Activated T-helper 1 cell treated with anti-CD3 and anti-CD28 coated beads, Interleukin-12 subunit alpha, Interleukin-12 subunit beta, Interleukin-2, Interleukin-4 antibody, amounts not matched to agents 30 ng/mL and 10 ng/mL and 1 ng/mL, durations not matched to agents 14 hours and 24 hours and 36 hours (primary cell): ENCODE measurements at regions of chr19 and their contacts with region 1.

Region 1: DNA sequence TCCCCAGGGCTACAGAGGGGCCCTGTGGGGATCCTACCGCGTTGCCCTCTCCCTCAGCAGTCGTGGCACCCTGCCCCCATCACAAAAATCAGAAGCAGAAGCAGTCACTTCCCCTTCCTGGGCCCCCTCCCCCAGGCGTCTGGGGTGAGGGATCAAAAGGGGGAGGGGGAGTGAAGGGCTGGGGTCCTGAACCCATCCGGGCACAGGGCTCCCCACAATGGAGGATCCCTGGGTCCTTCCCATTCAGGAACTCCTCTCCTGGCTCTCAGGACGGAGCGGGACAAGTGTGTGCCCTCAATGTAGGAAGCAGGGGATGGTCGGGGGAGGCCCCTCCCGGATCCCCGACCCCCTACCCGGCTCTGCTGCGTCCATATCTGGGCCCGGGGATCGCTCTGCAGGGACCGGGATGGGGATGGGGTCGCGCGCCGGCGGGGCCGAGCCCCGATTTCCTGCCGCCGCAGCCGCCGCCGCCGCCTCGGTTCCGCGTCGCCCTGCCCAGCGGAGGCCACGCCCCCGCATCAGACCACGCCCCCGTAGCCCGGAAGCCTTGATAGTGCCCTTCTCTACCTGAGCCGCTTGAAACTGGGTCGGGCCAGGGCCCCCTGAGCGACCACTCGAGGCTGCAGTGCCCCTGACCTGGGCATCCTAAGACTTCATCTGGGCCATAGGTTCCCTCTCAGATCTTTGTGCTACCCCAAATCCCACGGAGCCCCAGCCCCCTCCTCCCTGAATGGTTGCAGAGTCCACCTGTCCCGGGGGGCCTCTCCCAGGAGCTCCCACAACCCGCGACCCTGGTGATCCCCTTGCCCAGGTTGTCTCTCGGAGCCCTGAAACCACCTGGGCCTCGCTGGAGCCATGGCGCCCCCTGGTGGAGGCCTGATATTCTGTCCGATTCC is at the start of gene GMIP:
- DNase-seq: peak; percentile 82
- H3K4me3 Mint-ChIP-seq: peak within 1 kb of the TSS; percentile 95
- H3K27ac Mint-ChIP-seq: peak within 1 kb of the TSS; percentile 93
- H3K4me1 Mint-ChIP-seq: peaks cover 18% of the 10 kb centered on the region
- H3K27me3 Mint-ChIP-seq: no peaks in the 10 kb centered on the region
- total RNA-seq, gene GMIP: 67.8 and 71.6 TPM in 2 replicates

Region 2: DNA sequence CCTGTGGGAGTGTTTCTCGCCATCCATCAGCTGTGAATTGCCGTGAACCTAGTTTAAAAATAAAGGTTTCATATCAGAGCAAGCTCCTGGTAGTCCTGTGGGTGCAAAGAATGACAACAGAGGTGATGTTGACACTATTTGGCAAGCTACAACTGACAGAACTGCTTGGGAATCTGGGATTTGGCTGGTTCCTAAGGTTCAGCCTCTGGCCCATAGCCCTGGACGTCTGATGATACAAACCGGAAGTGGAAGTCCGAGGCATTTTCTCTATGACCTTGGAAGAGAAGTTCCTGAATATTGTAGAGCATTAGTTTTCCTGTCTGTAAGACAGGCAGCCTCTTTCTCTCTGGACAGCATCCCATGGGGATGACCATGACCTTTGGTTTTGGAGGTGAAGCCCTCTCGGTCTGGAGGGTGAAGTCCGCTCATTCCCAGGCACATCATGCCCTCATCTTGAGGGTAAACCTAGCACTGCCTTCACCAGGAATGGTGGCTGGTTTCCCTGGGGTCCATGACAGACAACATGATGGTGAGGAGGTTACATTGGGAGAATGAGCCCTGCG is 208.8 kb before region 1 on chr19:
- intact Hi-C with region 1: no loop called
- DNase-seq: no peak
- H3K4me3 Mint-ChIP-seq: no peak overlapping the region
- H3K27ac Mint-ChIP-seq: no peak overlapping the region
- H3K4me1 Mint-ChIP-seq: peaks cover 32% of the 10 kb centered on the region
- H3K27me3 Mint-ChIP-seq: no peaks in the 10 kb centered on the region

Region 3: DNA sequence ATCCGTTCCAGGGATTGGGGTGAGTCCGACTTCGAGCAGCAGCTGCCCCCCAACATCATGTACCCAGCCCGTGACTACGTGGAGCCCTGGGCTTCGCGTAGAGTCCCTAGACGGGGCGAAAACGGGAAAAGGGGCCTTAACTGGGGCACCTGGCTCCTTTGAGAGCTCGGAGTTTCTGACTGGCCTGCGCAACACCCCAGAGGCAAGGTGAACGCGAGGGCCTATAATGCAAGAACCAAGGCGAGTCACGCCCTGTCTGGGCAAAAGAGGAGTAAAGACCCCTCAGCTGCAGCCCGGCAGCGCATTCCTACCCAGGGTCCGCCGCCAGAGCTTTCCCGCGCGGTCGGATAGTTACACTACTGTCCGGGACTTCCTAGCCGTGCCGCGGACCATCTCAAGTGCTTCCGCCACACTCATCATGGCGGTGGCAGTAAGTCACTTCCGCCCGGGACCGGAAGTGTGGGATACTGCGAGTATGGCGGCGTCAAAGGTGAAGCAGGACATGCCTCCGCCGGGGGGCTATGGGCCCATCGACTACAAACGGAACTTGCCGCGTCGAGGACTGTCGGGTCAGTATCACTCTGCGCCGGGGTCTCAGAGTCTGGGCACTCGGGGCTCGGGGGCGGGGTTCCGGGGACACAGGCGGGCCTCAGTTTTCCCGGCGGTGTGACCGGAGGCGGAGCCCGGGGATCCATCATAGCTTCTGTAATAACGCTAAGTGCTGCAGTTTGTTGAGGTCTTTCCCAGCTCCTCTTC is 127.5 kb before region 1 on chr19 and contains the start of gene NDUFA13:
- intact Hi-C with region 1: loop called (anchors 1 kb)
- DNase-seq: peak; percentile 93
- H3K4me3 Mint-ChIP-seq: peak within 1 kb of the TSS; percentile 92
- H3K27ac Mint-ChIP-seq: peak within 1 kb of the TSS; percentile 94
- H3K4me1 Mint-ChIP-seq: peaks cover 9% of the 10 kb centered on the region
- H3K27me3 Mint-ChIP-seq: no peaks in the 10 kb centered on the region
- total RNA-seq, gene NDUFA13: 408 and 410 TPM in 2 replicates

Region 4: GRCh38 chr19:19540715-19541440 is 102.5 kb before region 1 on chr19:
- intact Hi-C with region 1: loop called (anchors 2 kb)
- DNase-seq: peak; percentile 67
- H3K4me3 Mint-ChIP-seq: peak overlapping the region; percentile 72
- H3K27ac Mint-ChIP-seq: no peak overlapping the region
- H3K4me1 Mint-ChIP-seq: peaks cover 27% of the 10 kb centered on the region
- H3K27me3 Mint-ChIP-seq: peaks cover 18% of the 10 kb centered on the region

Region 5: DNA sequence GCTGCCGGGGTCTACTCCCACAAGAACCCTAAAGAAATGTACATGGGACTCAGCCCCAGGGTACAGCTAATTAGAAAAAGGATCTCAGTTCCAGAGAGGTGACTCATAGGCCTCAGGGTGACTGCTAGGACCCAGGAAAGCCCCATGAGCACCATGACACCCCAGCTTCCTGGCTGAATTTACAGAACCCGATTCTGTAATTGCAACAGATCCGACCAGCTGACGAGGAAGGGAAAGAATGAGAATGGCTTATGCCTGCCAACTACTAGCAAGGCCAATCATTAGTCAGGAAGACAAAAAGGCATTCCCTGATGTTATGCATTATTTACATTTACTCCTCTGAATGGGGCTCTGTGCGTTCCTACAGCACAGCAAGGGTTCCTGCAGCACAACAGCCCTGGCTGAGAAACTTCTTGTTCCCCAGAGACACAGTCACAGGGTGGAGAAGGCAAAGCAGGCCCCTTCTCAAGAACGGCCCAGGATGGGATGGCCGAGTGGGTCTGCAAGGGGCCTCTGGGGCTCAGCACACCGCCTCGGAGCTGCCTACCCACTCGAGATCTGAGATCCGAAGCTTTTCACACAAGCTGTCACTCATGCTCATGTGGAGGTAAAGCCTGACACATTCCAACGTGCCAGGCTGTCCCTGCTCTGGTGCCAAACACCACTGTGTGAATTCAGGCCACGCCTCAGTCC is 52.1 kb before region 1 on chr19:
- intact Hi-C with region 1: loop called (anchors 1 kb)
- DNase-seq: peak; percentile 75
- H3K4me3 Mint-ChIP-seq: peak overlapping the region; percentile 74
- H3K27ac Mint-ChIP-seq: peak overlapping the region; percentile 97
- H3K4me1 Mint-ChIP-seq: peaks cover 77% of the 10 kb centered on the region
- H3K27me3 Mint-ChIP-seq: no peaks in the 10 kb centered on the region

Region 6: GRCh38 chr19:19618219-19619051 is 25.0 kb before region 1 on chr19 and contains the start of gene PBX4:
- intact Hi-C with region 1: loop called (anchors 1 kb)
- DNase-seq: peak; percentile 99
- H3K4me3 Mint-ChIP-seq: peak within 1 kb of the TSS; percentile 88
- H3K27ac Mint-ChIP-seq: peak within 1 kb of the TSS; percentile 95
- H3K4me1 Mint-ChIP-seq: peaks cover 48% of the 10 kb centered on the region
- H3K27me3 Mint-ChIP-seq: no peaks in the 10 kb centered on the region
- total RNA-seq, gene PBX4: 28.0 and 29.6 TPM in 2 replicates

Region 7: GRCh38 chr19:19776041-19777008 is 132.9 kb after region 1 on chr19:
- intact Hi-C with region 1: loop called (anchors 1 kb)
- DNase-seq: peak; percentile 90
- H3K4me3 Mint-ChIP-seq: peak overlapping the region; percentile 96
- H3K27ac Mint-ChIP-seq: peak overlapping the region; percentile 89
- H3K4me1 Mint-ChIP-seq: peaks cover 42% of the 10 kb centered on the region
- H3K27me3 Mint-ChIP-seq: no peaks in the 10 kb centered on the region